WTC11 (cell line): ENCODE measurements at regions of chr18 and their contacts with region 1.

Region 1: DNA sequence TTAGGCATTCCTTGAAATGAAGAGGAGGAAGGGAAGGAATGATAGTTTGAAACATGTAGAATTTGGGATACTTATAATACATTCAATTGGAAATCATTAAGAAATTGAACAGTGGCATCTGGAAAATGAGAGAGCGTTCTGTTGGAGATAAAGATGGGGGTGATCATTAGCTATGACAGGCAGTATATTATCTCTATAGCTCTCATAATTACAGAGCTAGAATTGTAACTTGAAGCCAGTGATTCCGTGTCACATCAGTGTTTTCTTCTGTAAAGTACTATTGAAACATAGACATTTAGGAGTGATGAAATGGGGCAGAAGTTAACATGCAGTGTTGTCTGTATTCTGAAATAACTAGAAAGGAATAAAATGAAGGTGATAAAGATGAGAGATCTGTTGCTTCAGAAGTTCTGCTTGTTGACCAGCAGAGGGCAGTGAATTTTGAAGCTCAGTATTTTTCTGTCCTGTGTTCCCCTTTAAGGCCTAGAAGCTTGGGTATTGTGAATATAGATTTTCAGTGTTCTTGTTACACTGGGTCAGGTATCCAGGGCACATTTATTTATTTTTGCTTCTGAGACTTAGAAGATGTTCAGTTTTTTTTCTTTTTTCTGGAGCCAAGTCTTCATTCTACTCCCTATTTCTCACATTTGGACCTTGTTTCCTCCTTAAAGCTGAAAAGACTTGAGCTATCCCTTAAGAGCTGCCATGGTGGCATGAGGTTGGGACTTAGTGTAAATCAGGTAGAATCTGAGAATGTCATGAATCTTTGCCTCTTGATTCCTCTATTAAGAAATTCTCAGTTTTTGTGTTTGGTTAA is 157.4 kb downstream of the TAF4B start:
- DNase-seq: no peak
- ATAC-seq: peak; percentile 83
- H3K4me3 Mint-ChIP-seq: no peak overlapping the region
- H3K27ac Mint-ChIP-seq: no peak overlapping the region
- H3K4me1 Mint-ChIP-seq: peaks cover 13% of the 10 kb centered on the region
- H3K27me3 Mint-ChIP-seq: no peaks in the 10 kb centered on the region
- CTCF ChIP-seq: no peak

Region 2: DNA sequence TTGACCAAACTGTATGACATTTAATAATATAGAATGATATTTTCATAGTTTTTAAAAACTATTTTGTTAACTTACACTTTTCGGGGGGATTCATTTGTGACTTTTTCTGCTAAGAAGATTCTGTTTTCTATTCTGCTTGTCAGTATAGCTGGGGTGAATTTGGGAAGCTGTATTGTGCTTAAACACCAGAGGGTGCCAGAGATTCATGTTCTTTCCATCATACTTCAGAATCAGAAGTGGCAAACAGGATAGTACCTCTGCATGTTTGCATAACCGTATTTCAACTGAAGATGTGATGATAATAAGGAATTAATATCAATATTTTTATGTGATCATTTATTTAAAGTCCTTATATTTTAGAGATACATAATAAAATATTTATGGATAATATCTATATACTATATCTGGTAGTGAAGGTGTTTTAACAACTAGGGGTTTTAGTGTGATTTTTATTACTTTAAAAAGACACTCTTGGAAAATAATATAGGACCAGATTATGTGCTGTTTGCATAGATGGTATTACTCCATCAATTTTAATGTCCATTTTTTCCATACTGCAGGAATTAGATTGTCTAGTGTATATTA is 76.4 kb before region 1 on chr18:
- CTCF ChIA-PET with region 1: interaction called, 16 read pairs
- POLR2A ChIA-PET with region 1: no interaction called
- DNase-seq: no peak
- ATAC-seq: 0 out of 2 replicates have a peak, but pooled peaks have one; percentile 52
- H3K4me3 Mint-ChIP-seq: no peak overlapping the region
- H3K27ac Mint-ChIP-seq: no peak overlapping the region
- H3K4me1 Mint-ChIP-seq: peaks cover 7% of the 10 kb centered on the region
- H3K27me3 Mint-ChIP-seq: no peaks in the 10 kb centered on the region
- CTCF ChIP-seq: 0 out of 2 replicates have a peak, but pooled peaks have one; percentile 28

Region 3: GRCh38 chr18:26405190-26405801 is 21.6 kb after region 1 on chr18:
- CTCF ChIA-PET with region 1: interaction called, 30 read pairs
- POLR2A ChIA-PET with region 1: no interaction called
- DNase-seq: peak; percentile 31
- ATAC-seq: peak; percentile 74
- H3K4me3 Mint-ChIP-seq: no peak overlapping the region
- H3K27ac Mint-ChIP-seq: no peak overlapping the region
- H3K4me1 Mint-ChIP-seq: peaks cover 37% of the 10 kb centered on the region
- H3K27me3 Mint-ChIP-seq: no peaks in the 10 kb centered on the region
- CTCF ChIP-seq: no peak

Region 4: GRCh38 chr18:26458526-26459232 is 75.0 kb after region 1 on chr18:
- CTCF ChIA-PET with region 1: interaction called, 23 read pairs
- POLR2A ChIA-PET with region 1: no interaction called
- DNase-seq: no peak
- ATAC-seq: no peak
- H3K4me3 Mint-ChIP-seq: no peak overlapping the region
- H3K27ac Mint-ChIP-seq: 0 out of 2 replicates have a peak overlapping the region, but pooled peaks have one; percentile 10
- H3K4me1 Mint-ChIP-seq: peaks cover 28% of the 10 kb centered on the region
- H3K27me3 Mint-ChIP-seq: peaks cover 9% of the 10 kb centered on the region; the same call in 1 of the 2 replicates
- CTCF ChIP-seq: no peak

Region 5: DNA sequence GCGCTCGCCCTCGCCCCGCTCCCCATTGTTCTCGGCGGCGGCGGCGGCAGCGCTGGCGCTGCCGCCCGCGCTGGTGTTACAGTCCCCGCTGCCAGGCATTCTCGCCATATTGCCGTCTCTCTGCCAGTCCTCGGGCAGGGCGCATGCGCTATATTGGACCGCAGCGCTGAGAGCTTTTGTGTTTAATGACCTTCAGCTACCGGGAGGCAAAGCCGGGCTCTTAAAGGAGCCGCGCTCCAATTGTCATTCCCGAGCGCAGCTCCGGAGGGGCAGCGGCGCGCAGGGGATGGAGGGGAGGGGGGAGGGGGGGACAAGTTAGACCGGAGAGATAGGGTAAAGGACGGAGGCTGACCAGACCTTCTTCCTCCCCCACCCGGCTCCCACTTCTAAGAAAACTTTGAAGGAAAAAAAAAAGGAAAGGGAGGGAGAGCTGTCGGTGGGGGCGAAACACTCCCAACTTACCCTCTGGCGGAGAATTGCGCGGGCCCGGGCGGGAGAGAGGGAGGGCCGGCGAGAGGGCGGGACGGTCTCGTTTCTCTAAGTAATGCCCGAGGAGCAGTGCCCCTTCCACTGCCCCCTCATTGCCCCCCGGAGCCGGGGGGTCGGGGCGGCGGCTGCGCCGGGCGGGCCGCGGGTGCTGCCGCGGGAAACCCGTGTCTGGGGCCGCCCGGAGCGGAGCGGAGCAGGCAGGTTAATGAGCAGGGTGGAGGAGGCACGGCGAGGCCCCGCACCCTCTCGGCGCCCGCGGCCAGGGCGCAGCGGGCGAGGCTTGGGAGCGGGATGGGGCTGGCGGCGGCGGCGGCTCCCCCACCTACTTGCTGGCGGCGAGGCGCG is 165.0 kb after region 1 on chr18 and contains the start of gene KCTD1:
- CTCF ChIA-PET with region 1: interaction called, 14 read pairs
- POLR2A ChIA-PET with region 1: no interaction called
- DNase-seq: peak; percentile 81
- ATAC-seq: peak; percentile 35
- H3K4me3 Mint-ChIP-seq: peak within 1 kb of the TSS; percentile 80
- H3K27ac Mint-ChIP-seq: no peak within 1 kb of the TSS
- H3K4me1 Mint-ChIP-seq: peaks cover 58% of the 10 kb centered on the region
- H3K27me3 Mint-ChIP-seq: peaks cover 72% of the 10 kb centered on the region
- CTCF ChIP-seq: no peak
- total RNA-seq, gene KCTD1: 16.9 to 23.3 TPM (median 18.7 TPM) in 3 replicates